ENCODE measurements at regions of chr5 and their contacts with region 1.

Region 1: GRCh38 chr5:179795863-179796833 is 2.4 kb downstream of the LTC4S start:
- DNase-seq: peak; percentile 94
- ATAC-seq: peak; percentile 84
- H3K4me3 ChIP-seq: peak overlapping the region; percentile 68
- H3K27ac ChIP-seq: peak overlapping the region; percentile 78
- H3K4me1 ChIP-seq: peaks cover 49% of the 10 kb centered on the region
- H3K27me3 ChIP-seq: no peaks in the 10 kb centered on the region
- CTCF ChIP-seq: peak; percentile 83

Region 2: GRCh38 chr5:179763215-179763945 is 32.8 kb before region 1 on chr5:
- intact Hi-C with region 1: loop called (anchors 5 kb)
- DNase-seq: no peak
- ATAC-seq: peak; percentile 85
- H3K4me3 ChIP-seq: no peak overlapping the region
- H3K27ac ChIP-seq: no peak overlapping the region
- H3K4me1 ChIP-seq: peaks cover 69% of the 10 kb centered on the region
- H3K27me3 ChIP-seq: no peaks in the 10 kb centered on the region
- CTCF ChIP-seq: peak; percentile 90